Activated CD4-positive, alpha-beta memory T cell treated with anti-CD3 and anti-CD28 coated beads for 36 hours (primary cell): ENCODE measurements at regions of chr7 and their contacts with region 1.

Region 1: GRCh38 chr7:145737617-145738016 is 379.0 kb upstream of the CNTNAP2 start:
- DNase-seq: no peak
- H3K4me3 Mint-ChIP-seq: no peak overlapping the region
- H3K27ac Mint-ChIP-seq: no peak overlapping the region
- H3K4me1 Mint-ChIP-seq: no peaks in the 10 kb centered on the region
- H3K27me3 Mint-ChIP-seq: no peaks in the 10 kb centered on the region

Region 2: GRCh38 chr7:146084086-146084485 is 346.5 kb after region 1 on chr7:
- CTCF ChIA-PET with region 1: no interaction called
- POLR2A ChIA-PET with region 1: no interaction called
- intact Hi-C with region 1: loop called (anchors 5 kb)
- DNase-seq: no peak
- H3K4me3 Mint-ChIP-seq: no peak overlapping the region
- H3K27ac Mint-ChIP-seq: no peak overlapping the region
- H3K4me1 Mint-ChIP-seq: no peaks in the 10 kb centered on the region
- H3K27me3 Mint-ChIP-seq: no peaks in the 10 kb centered on the region